Common myeloid progenitor, CD34-positive (primary cell): ENCODE measurements at regions of chr7 and their contacts with region 1.

Region 1: DNA sequence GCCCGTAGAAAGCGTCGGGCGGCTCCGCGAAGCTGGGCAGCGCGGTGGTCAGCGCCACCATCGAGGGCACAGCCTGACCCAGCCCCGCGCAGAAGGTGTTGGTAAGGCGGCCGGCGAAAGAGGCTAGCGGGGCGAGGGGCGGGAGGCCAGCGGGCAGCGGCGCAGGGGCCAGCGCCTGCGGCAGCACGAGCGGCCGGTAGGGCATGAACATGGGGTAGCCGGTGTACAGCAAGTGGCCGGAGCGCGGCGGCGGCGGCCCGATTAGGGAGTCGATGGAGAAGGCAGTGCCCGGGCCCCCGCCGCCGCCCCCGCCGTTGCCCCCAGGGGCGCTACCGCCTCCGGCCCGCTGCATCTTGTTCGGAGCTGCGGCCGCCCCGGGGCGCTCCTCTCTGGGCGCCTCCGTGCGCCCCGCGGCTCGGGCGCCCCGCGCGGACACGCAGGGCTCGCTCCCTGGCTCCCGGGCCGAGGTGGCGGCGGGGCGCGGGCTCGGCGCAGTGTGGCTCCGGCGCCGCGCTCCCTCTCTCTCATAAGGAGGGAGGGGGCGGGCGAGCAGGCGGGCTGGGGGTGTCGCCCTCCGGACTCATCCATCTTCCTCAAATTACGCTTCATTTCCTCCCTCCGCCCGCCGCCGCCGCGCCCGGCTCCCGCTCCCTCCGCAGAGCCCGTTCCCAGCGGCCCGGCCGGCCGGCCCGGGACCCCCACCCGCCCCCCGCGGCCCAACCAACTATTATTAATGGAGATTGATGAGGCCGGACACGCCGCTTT is at the start of gene GBX1:
- DNase-seq: peak in 2 of 3 donors; percentile 42 to 55
- H3K4me3 ChIP-seq: peak within 1 kb of the TSS; percentile 22 to 67 (median 55)
- H3K27ac ChIP-seq: no peak within 1 kb of the TSS
- H3K4me1 ChIP-seq: peaks cover 0 to 18% (median 16%) of the 10 kb centered on the region in 4 experiments
- H3K27me3 ChIP-seq: peaks cover 33 to 81% (median 39%) of the 10 kb centered on the region in 5 experiments

Region 2: DNA sequence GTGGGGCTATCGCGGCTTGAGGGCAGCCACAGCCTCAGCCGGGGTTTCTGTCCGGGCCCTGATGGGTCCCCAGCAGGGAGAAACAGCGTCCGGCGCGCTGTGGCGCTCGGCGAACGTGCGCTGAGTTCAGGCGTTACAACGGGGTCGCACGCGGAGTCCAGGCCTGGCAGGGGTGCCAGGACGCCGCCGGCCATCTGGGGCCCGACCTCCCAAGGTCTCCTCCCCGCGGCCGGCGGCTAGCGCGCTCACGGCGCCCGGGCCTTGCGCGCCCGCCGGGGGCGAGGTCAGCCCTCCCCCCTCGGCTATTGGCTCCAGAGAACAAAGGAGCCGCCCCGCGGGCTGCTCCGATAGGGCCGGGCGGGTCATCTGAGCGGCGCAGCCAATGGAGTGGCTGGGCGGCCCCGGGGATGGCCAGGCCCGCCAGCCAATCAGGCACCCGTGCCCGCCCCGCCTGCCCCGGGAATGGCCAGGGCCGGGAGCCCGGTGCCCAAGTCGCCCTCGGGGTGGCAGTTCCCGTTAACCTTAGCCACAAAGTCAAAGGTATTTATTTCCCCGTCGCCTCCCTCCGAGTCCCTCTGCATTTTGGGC is 788.4 kb before region 1 on chr7 and contains the start of gene ZNF775:
- CTCF ChIA-PET with region 1: no interaction called
- POLR2A ChIA-PET with region 1: no interaction called
- DNase-seq: peak; percentile 92 to 95 (median 94)
- H3K4me3 ChIP-seq: peak within 1 kb of the TSS; percentile 73 to 90 (median 84)
- H3K27ac ChIP-seq: peak within 1 kb of the TSS; percentile 50 to 90
- H3K4me1 ChIP-seq: peaks cover 11 to 54% (median 31%) of the 10 kb centered on the region in 4 experiments
- H3K27me3 ChIP-seq: no peaks in the 10 kb centered on the region

Region 3: GRCh38 chr7:151123822-151124464 is 43.4 kb before region 1 on chr7:
- CTCF ChIA-PET with region 1: interaction called, 14 read pairs
- POLR2A ChIA-PET with region 1: no interaction called
- DNase-seq: peak; percentile 77 to 87 (median 83)
- H3K4me3 ChIP-seq: no peak overlapping the region
- H3K27ac ChIP-seq: no peak overlapping the region
- H3K4me1 ChIP-seq: no peaks in the 10 kb centered on the region
- H3K27me3 ChIP-seq: no peaks in the 10 kb centered on the region